Transverse colon (tissue), 4 donors: ENCODE measurements at regions of chr18 and their contacts with region 1.

Region 1: DNA sequence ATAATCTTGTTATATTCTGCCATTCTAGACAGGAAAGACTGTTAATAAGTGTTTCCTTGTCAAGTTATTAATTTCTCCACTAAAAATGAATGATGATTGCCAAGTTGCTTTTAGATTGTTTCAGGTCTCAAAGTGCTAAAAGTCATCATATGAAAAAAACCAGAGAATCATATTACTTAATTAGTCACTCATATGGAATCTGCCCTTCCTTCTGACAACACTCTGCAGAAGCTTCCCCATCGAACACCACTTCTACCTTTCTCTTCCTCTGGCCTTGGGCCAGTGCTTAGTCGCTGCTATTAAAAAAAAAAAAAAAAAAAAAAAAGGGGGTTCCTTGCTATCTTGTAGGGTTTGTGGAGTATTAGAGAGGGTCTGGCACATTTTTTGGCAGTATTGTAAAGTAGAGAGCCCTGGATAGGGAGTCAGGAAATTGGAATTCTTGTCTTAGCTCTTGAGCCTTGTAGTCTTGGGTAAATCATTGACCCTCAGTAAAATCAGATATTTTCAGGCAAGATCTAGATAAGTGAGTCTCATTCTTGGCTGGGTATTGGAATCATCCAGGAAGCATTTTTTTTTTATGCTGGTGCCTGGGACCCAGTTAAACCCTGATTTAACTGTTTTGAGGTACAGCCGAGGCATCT is 141.7 kb upstream of the CCDC68 start:
- DNase-seq: no peak
- H3K4me3 ChIP-seq: no peak overlapping the region
- H3K27ac ChIP-seq: no peak overlapping the region
- H3K4me1 ChIP-seq: peaks cover 0 to 9% (median 4%) of the 10 kb centered on the region in 4 donors
- H3K27me3 ChIP-seq: no peaks in the 10 kb centered on the region
- CTCF ChIP-seq: no peak
- EP300 ChIP-seq: no peak
- POLR2A ChIP-seq: no peak

Region 2: DNA sequence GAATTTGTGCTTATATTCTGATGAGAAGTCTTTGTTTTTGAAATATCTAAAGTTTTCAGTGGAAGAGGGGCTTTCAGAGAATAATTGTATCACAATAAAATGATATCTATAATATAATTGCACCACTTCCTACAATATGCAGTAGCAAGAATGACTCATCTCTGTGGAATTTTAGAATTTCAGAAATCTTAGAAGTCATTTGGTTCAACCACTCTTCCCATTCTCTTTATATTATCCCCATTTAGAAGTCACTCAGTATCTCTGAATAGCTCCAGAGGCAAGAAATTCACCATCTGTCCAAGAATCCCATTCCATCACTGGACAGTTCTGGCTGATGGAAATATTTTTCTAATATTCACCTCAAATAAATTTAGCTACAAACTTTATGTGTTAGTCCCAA is 82.3 kb before region 1 on chr18:
- in situ Hi-C with region 1: loop called in 1 of 4 experiments (anchors 25 kb)
- intact Hi-C with region 1: no loop called
- DNase-seq: no peak
- H3K4me3 ChIP-seq: no peak overlapping the region
- H3K27ac ChIP-seq: no peak overlapping the region
- H3K4me1 ChIP-seq: no peaks in the 10 kb centered on the region
- H3K27me3 ChIP-seq: no peaks in the 10 kb centered on the region
- CTCF ChIP-seq: no peak
- EP300 ChIP-seq: no peak
- POLR2A ChIP-seq: no peak

Region 3: GRCh38 chr18:55289775-55290174 is 188.8 kb after region 1 on chr18:
- in situ Hi-C with region 1: no loop called
- intact Hi-C with region 1: no loop called
- DNase-seq: no peak
- H3K4me3 ChIP-seq: no peak overlapping the region
- H3K27ac ChIP-seq: no peak overlapping the region
- H3K4me1 ChIP-seq: peaks cover 0 to 11% (median 2%) of the 10 kb centered on the region in 4 donors
- H3K27me3 ChIP-seq: no peaks in the 10 kb centered on the region
- CTCF ChIP-seq: no peak
- EP300 ChIP-seq: no peak
- POLR2A ChIP-seq: no peak